HEK293T (cell line): ENCODE measurements at regions of chr4 and their contacts with region 1.

Region 1: GRCh38 chr4:166594326-166594946 is 639.9 kb downstream of the SPOCK3 start:
- DNase-seq: peak; percentile 56

Region 2: DNA sequence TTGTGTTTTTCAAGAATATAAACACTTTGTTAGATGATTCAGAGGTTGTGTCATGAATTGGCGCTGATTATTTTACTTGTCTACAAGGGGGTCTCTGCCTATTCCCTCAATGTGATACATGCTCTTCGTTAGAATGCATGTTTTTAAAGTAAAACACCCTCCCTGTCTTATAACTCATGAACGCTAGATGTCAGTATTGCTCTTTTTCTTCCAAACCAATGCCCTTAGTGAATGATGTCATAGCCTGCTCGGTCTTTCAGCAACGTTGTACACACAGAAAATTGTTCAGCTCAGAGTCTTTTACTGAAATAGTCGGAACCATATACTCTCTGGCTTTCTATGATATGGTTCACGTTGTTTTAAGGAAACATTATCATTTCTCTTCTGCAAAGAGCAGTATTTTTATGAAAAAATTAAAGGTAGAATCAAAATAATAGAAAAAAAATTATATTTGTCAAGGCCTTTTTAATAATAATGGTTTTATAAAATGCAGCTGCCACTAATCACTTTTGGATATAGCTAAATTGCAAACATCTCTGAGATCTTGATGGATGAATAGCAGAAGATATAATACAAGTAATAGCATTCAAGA is 428.5 kb before region 1 on chr4:
- CTCF ChIA-PET with region 1: interaction called, 26 read pairs
- POLR2A ChIA-PET with region 1: no interaction called
- DNase-seq: peak; percentile 63

Region 3: GRCh38 chr4:166546009-166546408 is 48.4 kb before region 1 on chr4:
- CTCF ChIA-PET with region 1: no interaction called
- POLR2A ChIA-PET with region 1: no interaction called
- DNase-seq: no peak

Region 4: DNA sequence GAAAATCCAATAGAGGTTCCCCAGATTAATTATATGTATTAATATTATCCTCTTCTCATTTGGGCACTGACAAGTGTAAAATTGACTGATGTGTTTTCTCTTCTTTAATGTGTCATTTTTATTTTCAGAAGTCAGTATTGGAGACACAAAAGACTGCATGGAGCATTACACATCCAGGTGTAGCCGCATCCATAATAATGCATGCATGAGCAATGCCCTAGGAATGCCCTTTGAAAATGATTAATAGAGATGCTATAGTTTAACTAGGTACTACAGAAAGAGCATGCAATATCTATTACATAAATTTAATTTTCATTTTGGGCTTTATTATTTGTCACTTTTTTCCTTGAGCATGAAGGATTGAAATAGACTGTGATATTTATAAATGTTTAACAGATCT is 129.9 kb after region 1 on chr4:
- CTCF ChIA-PET with region 1: no interaction called
- POLR2A ChIA-PET with region 1: no interaction called
- DNase-seq: no peak